ENCODE measurements at regions of chr1 and their contacts with region 1.

Region 1: GRCh38 chr1:93909146-93910050 is at the start of gene GCLM:
- DNase-seq: peak; percentile 81 to 97 (median 88)
- ATAC-seq: peak; percentile 98
- H3K4me3 ChIP-seq: peak within 1 kb of the TSS; percentile 61
- H3K4me3 Mint-ChIP-seq: peak within 1 kb of the TSS; percentile 86 to 99 (median 90)
- H3K27ac ChIP-seq: peak within 1 kb of the TSS; percentile 73
- H3K27ac Mint-ChIP-seq: peak within 1 kb of the TSS; percentile 60 to 94 (median 90)
- H3K4me1 ChIP-seq: peaks cover 9 to 13% of the 10 kb centered on the region in 2 donors
- H3K4me1 Mint-ChIP-seq: peaks cover 19 to 38% (median 33%) of the 10 kb centered on the region in 7 donors
- H3K27me3 ChIP-seq: no peaks in the 10 kb centered on the region
- H3K27me3 Mint-ChIP-seq: peaks cover 0 to 30% (median 0%) of the 10 kb centered on the region in 5 donors
- total RNA-seq, gene GCLM: 6.4 to 23.8 (median 11.5) TPM

Region 2: DNA sequence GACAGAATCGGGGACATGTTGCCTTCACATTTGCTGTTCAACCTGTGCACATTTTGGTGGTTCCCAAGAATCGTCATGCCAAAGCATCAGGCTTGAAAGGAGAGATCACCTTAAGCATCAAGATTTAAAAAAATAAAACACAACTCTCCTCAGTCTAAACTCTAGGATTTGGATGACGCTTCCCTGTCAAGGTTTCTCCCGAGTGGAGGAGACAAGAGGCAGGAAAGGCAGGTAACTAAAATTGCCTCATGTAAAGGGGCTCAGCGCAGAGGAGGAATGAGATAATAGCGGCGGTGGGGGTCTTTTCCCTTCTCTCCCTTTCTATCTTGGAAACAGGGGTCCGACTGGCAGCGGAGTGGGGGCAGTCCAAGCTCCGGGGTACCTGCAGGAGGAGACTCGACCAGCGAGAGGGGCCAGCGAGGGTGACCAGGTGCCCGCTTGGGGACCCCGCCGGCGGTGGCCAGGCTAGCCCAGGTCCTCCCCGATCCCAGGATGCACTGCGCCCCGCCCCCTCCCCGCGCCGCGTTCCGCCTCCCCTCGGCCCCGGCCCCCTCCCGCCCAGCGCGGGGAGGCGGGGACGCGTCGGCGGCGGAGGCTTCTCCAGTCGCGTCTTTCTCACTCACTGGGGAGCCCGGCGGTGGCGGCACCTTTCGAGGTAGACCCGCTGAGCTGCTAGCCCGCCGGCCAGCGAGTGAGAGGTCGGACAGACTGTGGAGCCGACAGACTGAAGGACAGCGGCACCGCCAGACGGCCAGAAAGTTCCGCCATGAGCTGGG is 461.7 kb before region 1 on chr1 and contains the start of gene FNBP1L:
- CTCF ChIA-PET with region 1: no interaction called
- POLR2A ChIA-PET with region 1: no interaction called
- intact Hi-C with region 1: loop called in 1 of 2 experiments (anchors 1 kb)
- DNase-seq: peak; percentile 40 to 60 (median 47)
- ATAC-seq: peak; percentile 87
- H3K4me3 ChIP-seq: peak within 1 kb of the TSS; percentile 61
- H3K4me3 Mint-ChIP-seq: peak within 1 kb of the TSS; percentile 89 to 97 (median 93)
- H3K27ac ChIP-seq: peak within 1 kb of the TSS; percentile 11
- H3K27ac Mint-ChIP-seq: peak within 1 kb of the TSS in 6 of 9 donors; percentile 28 to 94 (median 68)
- H3K4me1 ChIP-seq: peaks cover 10 to 12% of the 10 kb centered on the region in 2 donors
- H3K4me1 Mint-ChIP-seq: peaks cover 8 to 24% (median 22%) of the 10 kb centered on the region in 7 donors
- H3K27me3 ChIP-seq: peaks cover 19 to 22% of the 10 kb centered on the region in 2 donors
- H3K27me3 Mint-ChIP-seq: peaks cover 29 to 70% (median 54%) of the 10 kb centered on the region in 5 donors
- total RNA-seq, gene FNBP1L: 0.07 to 2.6 (median 1.1) TPM

Region 3: GRCh38 chr1:93878889-93879586 is 30.4 kb before region 1 on chr1 and contains the start of gene DNTTIP2:
- CTCF ChIA-PET with region 1: interaction called, 10 read pairs
- POLR2A ChIA-PET with region 1: interaction called, 38 read pairs
- intact Hi-C with region 1: loop called (anchors 1 kb)
- DNase-seq: peak; percentile 73 to 89 (median 86)
- ATAC-seq: peak; percentile 90
- H3K4me3 ChIP-seq: peak within 1 kb of the TSS; percentile 83
- H3K4me3 Mint-ChIP-seq: peak within 1 kb of the TSS; percentile 92 to 99 (median 97)
- H3K27ac ChIP-seq: peak within 1 kb of the TSS; percentile 94
- H3K27ac Mint-ChIP-seq: peak within 1 kb of the TSS; percentile 96 to 99 (median 98)
- H3K4me1 ChIP-seq: peaks cover 21 to 25% of the 10 kb centered on the region in 2 donors
- H3K4me1 Mint-ChIP-seq: peaks cover 34 to 62% (median 54%) of the 10 kb centered on the region in 7 donors
- H3K27me3 ChIP-seq: no peaks in the 10 kb centered on the region
- H3K27me3 Mint-ChIP-seq: no peaks in the 10 kb centered on the region
- total RNA-seq, gene DNTTIP2: 51.8 to 84.2 (median 77.5) TPM

Region 4: GRCh38 chr1:94160811-94161210 is 251.4 kb after region 1 on chr1:
- CTCF ChIA-PET with region 1: no interaction called
- POLR2A ChIA-PET with region 1: no interaction called
- intact Hi-C with region 1: no loop called
- DNase-seq: no peak
- ATAC-seq: no peak
- H3K4me3 ChIP-seq: no peak overlapping the region
- H3K4me3 Mint-ChIP-seq: no peak overlapping the region
- H3K27ac ChIP-seq: no peak overlapping the region
- H3K27ac Mint-ChIP-seq: no peak overlapping the region
- H3K4me1 ChIP-seq: no peaks in the 10 kb centered on the region
- H3K4me1 Mint-ChIP-seq: no peaks in the 10 kb centered on the region
- H3K27me3 ChIP-seq: no peaks in the 10 kb centered on the region
- H3K27me3 Mint-ChIP-seq: peaks cover 13 to 42% (median 26%) of the 10 kb centered on the region in 5 donors

Region 5: GRCh38 chr1:94962409-94963265 is 1053.2 kb after region 1 on chr1:
- CTCF ChIA-PET with region 1: no interaction called
- POLR2A ChIA-PET with region 1: no interaction called
- intact Hi-C with region 1: loop called in 1 of 2 experiments (anchors 5 kb)
- DNase-seq: peak in 7 of 9 donors; percentile 21 to 41 (median 35)
- ATAC-seq: peak; percentile 73
- H3K4me3 ChIP-seq: peak overlapping the region; percentile 53
- H3K4me3 Mint-ChIP-seq: peak overlapping the region; percentile 82 to 99 (median 90)
- H3K27ac ChIP-seq: peak overlapping the region; percentile 68
- H3K27ac Mint-ChIP-seq: peak overlapping the region; percentile 87 to 99 (median 96)
- H3K4me1 ChIP-seq: peaks cover 0 to 18% of the 10 kb centered on the region in 2 donors
- H3K4me1 Mint-ChIP-seq: peaks cover 0 to 31% (median 15%) of the 10 kb centered on the region in 7 donors
- H3K27me3 ChIP-seq: no peaks in the 10 kb centered on the region
- H3K27me3 Mint-ChIP-seq: no peaks in the 10 kb centered on the region

Region 6: DNA sequence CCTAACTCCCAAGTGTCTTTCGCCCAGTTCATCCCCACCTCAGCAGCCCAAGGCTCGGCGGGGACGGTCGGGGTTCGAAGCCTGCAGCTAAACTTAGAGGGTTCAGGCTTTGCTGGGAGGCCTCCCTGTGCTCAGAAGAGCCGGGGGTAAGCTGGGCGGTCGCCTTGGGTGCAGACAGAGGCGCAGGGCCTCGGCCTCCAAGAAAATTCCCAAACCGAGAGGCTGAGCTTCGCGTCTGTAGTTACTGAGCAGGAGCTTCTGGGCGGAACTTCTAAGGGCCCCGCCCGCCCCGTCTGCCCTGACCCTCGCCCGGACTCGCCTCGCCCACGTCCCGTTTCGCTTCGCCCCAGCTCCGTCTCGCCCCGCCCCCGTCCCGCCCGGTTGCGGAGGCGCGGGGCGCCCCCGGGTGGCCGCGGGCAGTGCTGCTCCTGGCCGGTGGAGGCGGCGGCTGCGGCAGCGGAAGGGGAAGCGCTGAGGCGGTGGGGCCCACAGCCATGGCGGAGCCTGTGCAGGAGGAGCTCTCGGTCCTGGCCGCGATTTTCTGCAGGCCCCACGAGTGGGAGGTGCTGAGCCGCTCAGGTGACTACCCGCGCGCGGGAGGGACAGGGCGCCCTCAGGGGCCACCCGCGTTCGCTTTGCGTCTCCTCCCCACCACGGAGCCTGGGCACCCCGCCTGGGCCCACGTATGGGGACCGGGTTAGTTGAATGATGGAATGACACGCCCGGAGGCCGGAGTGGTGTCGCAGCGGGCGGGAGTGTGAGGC is 1324.5 kb after region 1 on chr1 and contains the start of gene RWDD3:
- CTCF ChIA-PET with region 1: no interaction called
- POLR2A ChIA-PET with region 1: no interaction called
- intact Hi-C with region 1: loop called in 1 of 2 experiments (anchors 2 kb)
- DNase-seq: peak; percentile 86 to 96 (median 93)
- ATAC-seq: peak; percentile 98
- H3K4me3 ChIP-seq: peak within 1 kb of the TSS; percentile 78
- H3K4me3 Mint-ChIP-seq: peak within 1 kb of the TSS; percentile 89 to 97 (median 92)
- H3K27ac ChIP-seq: peak within 1 kb of the TSS; percentile 79
- H3K27ac Mint-ChIP-seq: peak within 1 kb of the TSS; percentile 86 to 97 (median 91)
- H3K4me1 ChIP-seq: peaks cover 6 to 12% of the 10 kb centered on the region in 2 donors
- H3K4me1 Mint-ChIP-seq: peaks cover 23 to 54% (median 46%) of the 10 kb centered on the region in 7 donors
- H3K27me3 ChIP-seq: no peaks in the 10 kb centered on the region
- H3K27me3 Mint-ChIP-seq: peaks cover 16 to 30% (median 23%) of the 10 kb centered on the region in 5 donors
- total RNA-seq, gene RWDD3: 9.1 to 27.9 (median 20.0) TPM

Measured in naive thymus-derived CD4-positive, alpha-beta T cell (primary cell).